ENCODE measurements at regions of chr20 and their contacts with region 1.

Region 1: GRCh38 chr20:59598625-59599310 is 5.6 kb upstream of the PHACTR3 start:
- DNase-seq: peak; percentile 8
- ATAC-seq: peak; percentile 88
- H3K4me3 ChIP-seq: no peak overlapping the region
- H3K27ac ChIP-seq: no peak overlapping the region
- H3K4me1 ChIP-seq: no peaks in the 10 kb centered on the region
- H3K27me3 ChIP-seq: peaks cover 2 to 4% of the 10 kb centered on the region in 2 experiments
- CTCF ChIP-seq: peak; percentile 84 to 90 (median 88)
- EP300 ChIP-seq: no peak
- POLR2A ChIP-seq: no peak
- RAD21 ChIP-seq: peak; percentile 76

Region 2: GRCh38 chr20:59751056-59751688 is 152.4 kb after region 1 on chr20:
- CTCF ChIA-PET with region 1: interaction called, 17 read pairs
- POLR2A ChIA-PET with region 1: no interaction called
- RAD21 ChIA-PET with region 1: interaction called, 6 read pairs
- SMC1A ChIA-PET with region 1: interaction called, 7 read pairs
- in situ Hi-C with region 1: loop called (anchors 5 kb)
- intact Hi-C with region 1: loop called (anchors 1 kb)
- DNase-seq: peak; percentile 19
- ATAC-seq: peak; percentile 88
- H3K4me3 ChIP-seq: no peak overlapping the region
- H3K27ac ChIP-seq: peak overlapping the region; percentile 2; the same call in 1 of the 2 replicates
- H3K4me1 ChIP-seq: peaks cover 28% of the 10 kb centered on the region
- H3K27me3 ChIP-seq: no peaks in the 10 kb centered on the region; a peak in 1 of 4 replicates
- CTCF ChIP-seq: peak; percentile 84 to 88 (median 86)
- EP300 ChIP-seq: no peak
- POLR2A ChIP-seq: no peak
- RAD21 ChIP-seq: peak; percentile 86

Measured in GM12878 (cell line).